Right lobe of liver (tissue), 6 donors: ENCODE measurements at regions of chr12 and their contacts with region 1.

Region 1: DNA sequence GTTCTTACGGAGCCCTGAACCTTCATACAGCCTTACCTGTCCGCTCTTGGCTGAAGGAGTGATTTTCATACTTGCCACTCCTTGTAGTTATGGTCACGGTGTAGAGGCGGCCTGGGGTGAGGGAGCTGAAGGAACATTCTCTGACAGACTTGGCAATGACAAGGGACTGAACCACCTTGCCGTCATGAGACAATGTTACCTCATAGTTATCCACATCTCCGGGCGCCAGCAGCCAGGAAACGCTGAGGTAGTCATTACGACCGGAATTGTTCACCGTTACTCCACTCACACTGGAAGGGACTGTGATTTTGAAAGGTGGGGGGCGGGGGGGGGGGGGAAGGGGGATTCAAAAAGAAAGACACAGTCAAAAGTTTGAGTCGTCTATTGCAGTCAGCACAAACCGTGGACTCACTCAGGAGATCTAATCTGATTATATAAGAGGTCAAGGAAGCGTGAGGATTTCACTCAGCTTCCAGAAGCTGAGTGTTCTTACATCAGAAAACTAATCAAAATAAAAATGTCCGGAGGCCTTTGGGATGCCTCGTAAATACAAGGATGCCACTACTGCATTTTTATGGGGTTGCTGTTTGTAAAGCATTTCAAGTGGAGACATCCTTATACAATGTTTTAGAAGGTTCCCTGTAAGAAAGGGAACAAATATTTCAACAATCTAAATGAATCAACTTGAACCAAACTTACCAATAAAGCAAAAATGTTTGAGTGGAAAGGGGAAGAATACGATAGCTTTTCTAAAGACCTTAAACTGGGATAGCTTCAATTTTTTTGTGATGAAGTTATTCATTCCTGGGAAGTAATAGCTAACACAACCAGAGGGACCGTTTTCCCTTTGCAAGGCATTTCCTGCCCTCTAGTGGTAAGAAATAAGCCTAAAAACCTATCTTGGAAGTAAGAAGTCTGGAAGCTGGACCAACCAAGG is 60.6 kb downstream of the PTPRB start:
- DNase-seq: no peak
- ATAC-seq: peak; percentile 81 to 91 (median 84)
- H3K4me3 ChIP-seq: no peak overlapping the region
- H3K27ac ChIP-seq: no peak overlapping the region
- H3K4me1 ChIP-seq: no peaks in the 10 kb centered on the region
- H3K27me3 ChIP-seq: no peaks in the 10 kb centered on the region
- CTCF ChIP-seq: peak; percentile 72 to 84 (median 79)
- POLR2A ChIP-seq: no peak

Region 2: GRCh38 chr12:69880571-69880970 is 696.0 kb before region 1 on chr12:
- intact Hi-C with region 1: loop called in 1 of 2 experiments (anchors 10 kb)
- DNase-seq: no peak
- ATAC-seq: no peak
- H3K4me3 ChIP-seq: no peak overlapping the region
- H3K27ac ChIP-seq: no peak overlapping the region
- H3K4me1 ChIP-seq: peaks cover 0 to 4% (median 0%) of the 10 kb centered on the region in 4 donors
- H3K27me3 ChIP-seq: no peaks in the 10 kb centered on the region
- CTCF ChIP-seq: no peak
- POLR2A ChIP-seq: no peak

Region 3: GRCh38 chr12:69900720-69901131 is 675.9 kb before region 1 on chr12:
- intact Hi-C with region 1: loop called in 1 of 2 experiments (anchors 10 kb)
- DNase-seq: peak; percentile 51 to 80 (median 58)
- ATAC-seq: peak; percentile 87 to 97 (median 94)
- H3K4me3 ChIP-seq: no peak overlapping the region
- H3K27ac ChIP-seq: no peak overlapping the region
- H3K4me1 ChIP-seq: no peaks in the 10 kb centered on the region
- H3K27me3 ChIP-seq: no peaks in the 10 kb centered on the region
- CTCF ChIP-seq: peak; percentile 83 to 90 (median 86)
- POLR2A ChIP-seq: no peak